ENCODE measurements at regions of chr12 and their contacts with region 1.

Region 1: DNA sequence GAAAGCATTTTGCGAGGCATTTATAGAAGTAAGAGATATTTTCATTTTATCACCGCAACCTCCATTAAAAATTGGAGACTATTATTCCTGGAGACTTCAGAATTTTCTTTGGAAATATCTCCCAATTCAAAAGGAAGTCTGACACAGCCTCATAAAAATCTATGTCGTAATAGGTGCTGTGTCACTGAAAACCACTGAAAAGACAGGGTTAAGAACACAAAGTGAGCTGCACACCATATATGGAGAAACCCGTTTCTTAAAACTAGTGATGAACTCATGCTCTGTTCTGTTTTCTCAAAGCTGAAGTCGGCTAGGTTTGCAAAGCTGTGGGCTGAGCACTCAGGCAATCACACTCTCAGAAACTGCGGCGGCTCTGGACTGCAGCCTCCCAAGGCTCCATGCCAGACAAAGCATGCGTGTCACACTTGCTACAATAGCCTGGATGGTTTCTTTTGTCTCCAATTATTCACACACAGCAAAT is at the start of gene GLIPR1:
- DNase-seq: peak in 9 of 10 donors; percentile 37 to 79 (median 71)
- H3K4me3 ChIP-seq: peak within 1 kb of the TSS; percentile 10 to 76 (median 53)
- H3K27ac ChIP-seq: peak within 1 kb of the TSS in 50 of 59 donors; percentile 3 to 83 (median 57)
- H3K27me3 ChIP-seq: no peaks in the 10 kb centered on the region
- CTCF ChIP-seq: peak in 1 of 56 donors; percentile 12
- total RNA-seq, gene GLIPR1: 7.5 to 35.7 (median 20.7) TPM

Region 2: GRCh38 chr12:75390899-75391538 is 89.5 kb before region 1 on chr12 and contains the start of gene GLIPR1L2:
- intact Hi-C with region 1: loop called in 1 of 2 experiments (anchors 10 kb)
- DNase-seq: peak; percentile 92 to 97 (median 95)
- H3K4me3 ChIP-seq: peak within 1 kb of the TSS; percentile 51 to 86 (median 75)
- H3K27ac ChIP-seq: peak within 1 kb of the TSS; percentile 70 to 98 (median 92)
- H3K27me3 ChIP-seq: no peaks in the 10 kb centered on the region
- CTCF ChIP-seq: peak; percentile 67 to 95 (median 84)
- total RNA-seq, gene GLIPR1L2: 0.80 to 10.4 (median 3.9) TPM